Activated CD4-positive, alpha-beta T cell treated with anti-CD3 and anti-CD28 coated beads for 36 hours (primary cell): ENCODE measurements at regions of chr2 and their contacts with region 1.

Region 1: DNA sequence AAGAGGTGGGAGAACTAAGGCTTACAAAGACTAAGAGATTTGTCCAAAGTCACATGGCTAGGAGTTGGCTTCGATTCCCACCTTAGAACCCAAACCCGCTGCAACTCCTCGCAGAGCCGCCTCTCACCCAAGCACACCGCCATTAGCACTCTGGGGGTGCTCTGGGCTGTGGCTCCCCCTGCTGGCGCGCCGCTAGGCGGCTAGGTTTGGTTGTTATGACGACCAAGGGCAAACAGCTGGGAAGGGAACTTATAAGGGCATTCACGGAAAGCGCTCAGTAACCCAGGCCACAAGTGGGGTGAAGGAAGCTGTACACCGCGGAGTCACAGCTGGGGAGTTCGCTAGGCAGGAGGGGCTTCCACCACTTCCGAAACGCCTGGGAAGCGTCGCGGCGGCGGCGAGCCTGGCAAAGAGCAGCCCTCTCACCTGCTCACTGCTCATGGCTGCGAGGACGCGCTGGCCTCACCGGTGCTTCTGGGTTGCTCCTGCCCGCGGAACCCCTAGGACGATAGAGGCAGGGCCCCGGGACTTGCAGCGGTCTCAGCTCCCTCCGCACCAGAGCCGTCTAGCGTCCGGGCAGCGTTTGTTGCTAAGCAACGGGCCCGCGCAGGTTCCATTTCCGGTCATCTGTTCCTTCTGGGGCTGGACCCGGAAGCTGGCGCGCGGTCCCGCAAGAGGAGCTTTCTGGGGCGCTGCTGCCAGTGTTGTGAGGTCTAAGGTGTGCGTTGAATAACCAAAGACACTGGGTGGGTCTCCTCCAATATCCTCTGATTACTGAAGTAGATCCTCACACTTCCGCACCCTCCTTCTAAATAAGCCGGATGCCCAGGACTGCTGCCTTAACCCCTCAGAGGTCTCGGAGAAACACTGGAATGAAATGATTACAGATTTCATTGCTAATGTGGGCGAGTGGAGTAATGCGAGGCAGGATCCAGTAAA is at the start of gene DNAH7:
- DNase-seq: peak; percentile 94
- ATAC-seq: peak; percentile 97
- H3K4me3 Mint-ChIP-seq: peak within 1 kb of the TSS; percentile 77
- H3K27ac Mint-ChIP-seq: peak within 1 kb of the TSS; percentile 72
- H3K4me1 Mint-ChIP-seq: peaks cover 10% of the 10 kb centered on the region
- H3K27me3 Mint-ChIP-seq: peaks cover under 1% of the 10 kb centered on the region
- total RNA-seq, gene DNAH7: not detected

Region 2: GRCh38 chr2:194559964-194560363 is 1508.6 kb before region 1 on chr2:
- CTCF ChIA-PET with region 1: interaction called, 3 read pairs
- POLR2A ChIA-PET with region 1: no interaction called
- intact Hi-C with region 1: loop called in 1 of 2 experiments (anchors 10 kb)
- DNase-seq: peak; percentile 3
- ATAC-seq: no peak
- H3K4me3 Mint-ChIP-seq: no peak overlapping the region
- H3K27ac Mint-ChIP-seq: no peak overlapping the region
- H3K4me1 Mint-ChIP-seq: no peaks in the 10 kb centered on the region
- H3K27me3 Mint-ChIP-seq: no peaks in the 10 kb centered on the region

Region 3: GRCh38 chr2:195498176-195498575 is 570.4 kb before region 1 on chr2:
- CTCF ChIA-PET with region 1: interaction called, 3 read pairs
- POLR2A ChIA-PET with region 1: no interaction called
- intact Hi-C with region 1: loop called in 1 of 2 experiments (anchors 10 kb)
- DNase-seq: peak; percentile 68
- ATAC-seq: peak; percentile 42
- H3K4me3 Mint-ChIP-seq: no peak overlapping the region
- H3K27ac Mint-ChIP-seq: peak overlapping the region; percentile 49
- H3K4me1 Mint-ChIP-seq: peaks cover 31% of the 10 kb centered on the region
- H3K27me3 Mint-ChIP-seq: no peaks in the 10 kb centered on the region

Region 4: DNA sequence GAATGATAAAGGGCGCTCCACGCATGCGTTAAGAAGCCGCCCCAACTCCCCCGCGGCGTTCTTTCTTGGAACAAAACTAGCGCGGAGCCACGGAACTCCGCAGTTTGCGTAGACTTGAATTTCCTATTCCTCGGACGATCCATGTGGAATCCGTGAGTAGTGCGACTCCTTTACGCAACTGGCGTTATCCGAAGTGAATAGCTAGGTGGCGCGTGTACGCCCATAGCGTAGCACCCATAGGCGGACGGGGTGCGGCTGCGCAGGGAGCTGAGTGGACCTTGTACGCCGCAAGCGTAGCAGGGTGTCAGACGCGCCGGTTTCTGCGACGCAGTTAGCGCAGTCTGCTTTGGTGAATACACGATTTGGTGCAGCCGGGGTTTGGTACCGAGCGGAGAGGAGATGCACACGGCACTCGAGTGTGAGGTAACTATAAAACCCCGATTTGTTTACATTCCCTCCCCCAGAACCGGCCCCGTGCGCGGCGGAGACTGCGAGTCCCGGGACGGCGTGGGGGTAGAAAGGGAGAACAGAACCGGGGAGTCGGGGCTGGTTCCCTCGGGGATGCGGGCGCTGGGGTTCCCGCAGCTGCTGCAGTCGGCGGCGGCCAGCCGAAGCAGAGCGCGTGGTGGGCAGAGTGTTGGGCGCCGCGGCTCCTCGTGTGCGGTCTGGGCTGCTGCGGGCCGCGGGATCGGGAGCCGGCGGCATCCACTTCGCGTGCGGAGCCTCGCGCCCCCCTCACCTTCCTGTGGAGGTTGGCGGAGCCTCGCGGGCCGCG is 411.5 kb before region 1 on chr2 and contains the start of gene SLC39A10:
- CTCF ChIA-PET with region 1: interaction called, 10 read pairs
- POLR2A ChIA-PET with region 1: interaction called, 3 read pairs
- intact Hi-C with region 1: loop called (anchors 2 kb)
- DNase-seq: peak; percentile 98
- ATAC-seq: peak; percentile 86
- H3K4me3 Mint-ChIP-seq: peak within 1 kb of the TSS; percentile 86
- H3K27ac Mint-ChIP-seq: peak within 1 kb of the TSS; percentile 99
- H3K4me1 Mint-ChIP-seq: peaks cover 26% of the 10 kb centered on the region
- H3K27me3 Mint-ChIP-seq: no peaks in the 10 kb centered on the region
- total RNA-seq, gene SLC39A10: 24.0 to 27.8 TPM

Region 5: GRCh38 chr2:196046123-196046917 is 22.2 kb before region 1 on chr2:
- CTCF ChIA-PET with region 1: interaction called, 11 read pairs
- POLR2A ChIA-PET with region 1: no interaction called
- intact Hi-C with region 1: no loop called
- DNase-seq: no peak
- ATAC-seq: no peak
- H3K4me3 Mint-ChIP-seq: no peak overlapping the region
- H3K27ac Mint-ChIP-seq: no peak overlapping the region
- H3K4me1 Mint-ChIP-seq: no peaks in the 10 kb centered on the region
- H3K27me3 Mint-ChIP-seq: peaks cover 4% of the 10 kb centered on the region

Region 6: GRCh38 chr2:196337208-196337953 is 268.8 kb after region 1 on chr2:
- CTCF ChIA-PET with region 1: interaction called, 34 read pairs
- POLR2A ChIA-PET with region 1: interaction called, 3 read pairs
- intact Hi-C with region 1: no loop called
- DNase-seq: peak; percentile 35
- ATAC-seq: peak; percentile 49
- H3K4me3 Mint-ChIP-seq: no peak overlapping the region
- H3K27ac Mint-ChIP-seq: no peak overlapping the region
- H3K4me1 Mint-ChIP-seq: peaks cover 9% of the 10 kb centered on the region
- H3K27me3 Mint-ChIP-seq: no peaks in the 10 kb centered on the region